ENCODE measurements at regions of chr10 and their contacts with region 1.

Region 1: GRCh38 chr10:105063796-105064195 is 422.7 kb downstream of the SORCS3 start:
- DNase-seq: peak; percentile 71
- H3K4me3 ChIP-seq: no peak overlapping the region
- H3K27ac ChIP-seq: no peak overlapping the region
- H3K4me1 ChIP-seq: no peaks in the 10 kb centered on the region
- H3K27me3 ChIP-seq: peaks cover 58% of the 10 kb centered on the region
- CTCF ChIP-seq: peak; percentile 79

Region 2: GRCh38 chr10:105328503-105329133 is 264.8 kb after region 1 on chr10:
- CTCF ChIA-PET with region 1: no interaction called
- POLR2A ChIA-PET with region 1: no interaction called
- intact Hi-C with region 1: no loop called
- DNase-seq: no peak
- H3K4me3 ChIP-seq: no peak overlapping the region
- H3K27ac ChIP-seq: no peak overlapping the region
- H3K4me1 ChIP-seq: no peaks in the 10 kb centered on the region
- H3K27me3 ChIP-seq: peaks cover 46% of the 10 kb centered on the region
- CTCF ChIP-seq: no peak

Region 3: GRCh38 chr10:105691811-105692210 is 628.0 kb after region 1 on chr10:
- CTCF ChIA-PET with region 1: no interaction called
- POLR2A ChIA-PET with region 1: no interaction called
- intact Hi-C with region 1: loop called (anchors 2 kb)
- DNase-seq: peak; percentile 62
- H3K4me3 ChIP-seq: no peak overlapping the region
- H3K27ac ChIP-seq: no peak overlapping the region
- H3K4me1 ChIP-seq: no peaks in the 10 kb centered on the region
- H3K27me3 ChIP-seq: peaks cover 10% of the 10 kb centered on the region
- CTCF ChIP-seq: peak; percentile 67

Region 4: GRCh38 chr10:106189292-106189691 is 1125.5 kb after region 1 on chr10:
- CTCF ChIA-PET with region 1: interaction called, 6 read pairs
- POLR2A ChIA-PET with region 1: no interaction called
- intact Hi-C with region 1: loop called (anchors 2 kb)
- DNase-seq: peak; percentile 70
- H3K4me3 ChIP-seq: no peak overlapping the region
- H3K27ac ChIP-seq: no peak overlapping the region
- H3K4me1 ChIP-seq: no peaks in the 10 kb centered on the region
- H3K27me3 ChIP-seq: no peaks in the 10 kb centered on the region
- CTCF ChIP-seq: peak; percentile 84

Region 5: DNA sequence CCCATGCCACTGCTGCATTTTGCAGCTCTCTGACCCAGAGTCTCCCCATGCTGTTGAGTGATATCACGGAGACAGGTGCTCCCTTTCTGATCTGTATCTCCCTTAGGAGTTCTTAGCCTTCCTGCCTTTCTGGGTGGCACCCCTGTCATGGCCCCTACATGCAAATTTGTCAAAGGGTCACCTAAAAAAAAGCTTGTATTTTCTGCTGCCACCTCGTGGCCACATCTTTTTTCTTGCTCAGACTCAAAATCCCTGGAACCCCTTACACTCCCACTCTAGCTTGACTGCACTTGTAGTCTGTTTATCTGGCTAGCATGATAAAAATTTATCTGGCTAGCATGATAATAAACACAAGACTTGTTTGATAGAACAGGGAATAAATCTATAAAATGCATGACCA is 1291.7 kb after region 1 on chr10:
- CTCF ChIA-PET with region 1: no interaction called
- POLR2A ChIA-PET with region 1: no interaction called
- intact Hi-C with region 1: loop called (anchors 10 kb)
- DNase-seq: peak; percentile 36
- H3K4me3 ChIP-seq: no peak overlapping the region
- H3K27ac ChIP-seq: no peak overlapping the region
- H3K4me1 ChIP-seq: no peaks in the 10 kb centered on the region
- H3K27me3 ChIP-seq: no peaks in the 10 kb centered on the region
- CTCF ChIP-seq: peak; percentile 66